IMR-90 (cell line): ENCODE measurements at regions of chr10 and their contacts with region 1.

Region 1: GRCh38 chr10:115572706-115573455 is 479.7 kb downstream of the ATRNL1 start:
- DNase-seq: no peak
- ATAC-seq: peak; percentile 42; the same call in 1 of the 2 replicates
- H3K4me3 ChIP-seq: no peak overlapping the region
- H3K27ac ChIP-seq: no peak overlapping the region
- H3K4me1 ChIP-seq: no peaks in the 10 kb centered on the region
- H3K27me3 ChIP-seq: no peaks in the 10 kb centered on the region
- CTCF ChIP-seq: no peak
- POLR2A ChIP-seq: no peak
- RAD21 ChIP-seq: no peak

Region 2: GRCh38 chr10:114714281-114714741 is 858.6 kb before region 1 on chr10:
- CTCF ChIA-PET with region 1: no interaction called
- POLR2A ChIA-PET with region 1: no interaction called
- dilution Hi-C with region 1: no loop called
- in situ Hi-C with region 1: no loop called
- intact Hi-C with region 1: no loop called
- DNase-seq: peak; percentile 98
- ATAC-seq: peak; percentile 95
- H3K4me3 ChIP-seq: no peak overlapping the region
- H3K27ac ChIP-seq: peak overlapping the region; percentile 76
- H3K4me1 ChIP-seq: peaks cover 14% of the 10 kb centered on the region
- H3K27me3 ChIP-seq: no peaks in the 10 kb centered on the region
- CTCF ChIP-seq: no peak
- POLR2A ChIP-seq: no peak
- RAD21 ChIP-seq: no peak

Region 3: GRCh38 chr10:115525141-115525540 is 47.7 kb before region 1 on chr10:
- CTCF ChIA-PET with region 1: no interaction called
- POLR2A ChIA-PET with region 1: no interaction called
- dilution Hi-C with region 1: no loop called
- in situ Hi-C with region 1: no loop called
- intact Hi-C with region 1: loop called (anchors 5 kb)
- DNase-seq: no peak
- ATAC-seq: no peak
- H3K4me3 ChIP-seq: no peak overlapping the region
- H3K27ac ChIP-seq: no peak overlapping the region
- H3K4me1 ChIP-seq: no peaks in the 10 kb centered on the region
- H3K27me3 ChIP-seq: no peaks in the 10 kb centered on the region
- CTCF ChIP-seq: no peak
- POLR2A ChIP-seq: no peak
- RAD21 ChIP-seq: no peak